ENCODE measurements at regions of chr6 and their contacts with region 1.

Region 1: GRCh38 chr6:46090115-46091079 is 39.4 kb upstream of the ENPP4 start:
- DNase-seq: no peak
- H3K4me3 ChIP-seq: no peak overlapping the region
- H3K27me3 ChIP-seq: no peaks in the 10 kb centered on the region
- CTCF ChIP-seq: peak; percentile 74

Region 2: DNA sequence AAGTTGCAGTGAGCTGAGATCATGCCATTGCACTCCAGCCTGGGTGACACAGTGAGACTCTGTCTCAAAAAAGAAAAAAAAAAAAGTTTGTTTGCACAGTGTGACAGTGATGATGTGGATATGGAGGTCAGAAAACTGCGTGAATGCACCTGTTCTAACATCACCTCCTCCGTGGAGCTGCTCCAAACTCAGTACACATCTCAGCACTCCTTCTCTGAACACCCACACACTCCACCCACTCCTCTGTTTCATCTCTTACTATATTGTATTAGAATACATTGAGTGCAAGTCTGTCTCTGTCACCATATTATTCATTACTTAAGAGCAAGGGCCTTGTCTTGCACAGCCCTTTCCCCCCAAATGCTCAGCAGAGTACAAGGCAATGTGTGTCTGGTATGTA is 12.1 kb before region 1 on chr6:
- CTCF ChIA-PET with region 1: interaction called, 24 read pairs
- POLR2A ChIA-PET with region 1: no interaction called
- DNase-seq: no peak
- H3K4me3 ChIP-seq: no peak overlapping the region
- H3K27me3 ChIP-seq: no peaks in the 10 kb centered on the region
- CTCF ChIP-seq: no peak

Region 3: GRCh38 chr6:46104209-46104608 is 13.8 kb after region 1 on chr6:
- CTCF ChIA-PET with region 1: interaction called, 19 read pairs
- POLR2A ChIA-PET with region 1: no interaction called
- DNase-seq: no peak
- H3K4me3 ChIP-seq: no peak overlapping the region
- H3K27me3 ChIP-seq: 0 out of 2 replicates have a peak, but pooled peaks cover 3% of the 10 kb centered on the region
- CTCF ChIP-seq: no peak

Region 4: DNA sequence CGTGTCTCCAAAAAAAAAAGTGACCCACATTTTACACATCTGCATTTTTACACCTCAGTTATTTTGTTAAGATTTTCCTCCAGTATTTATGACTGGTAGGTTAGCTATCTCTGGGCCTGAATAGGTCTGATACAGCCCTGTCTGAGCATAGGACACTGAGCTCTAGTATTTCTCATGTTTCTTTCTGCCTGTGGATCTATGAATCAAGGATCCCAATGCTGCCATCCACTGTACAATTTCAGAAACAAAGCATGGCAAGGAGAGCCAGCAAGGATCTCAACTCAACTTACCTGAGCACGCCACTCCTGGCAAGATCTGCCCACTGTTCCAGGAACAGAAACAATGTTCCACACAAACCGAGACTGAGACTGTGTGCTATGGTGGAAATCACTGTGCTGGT is 116.8 kb after region 1 on chr6:
- CTCF ChIA-PET with region 1: interaction called, 13 read pairs
- POLR2A ChIA-PET with region 1: no interaction called
- DNase-seq: no peak
- H3K4me3 ChIP-seq: no peak overlapping the region
- H3K27me3 ChIP-seq: no peaks in the 10 kb centered on the region
- CTCF ChIP-seq: no peak

Region 5: GRCh38 chr6:46215213-46215612 is 124.8 kb after region 1 on chr6:
- CTCF ChIA-PET with region 1: interaction called, 13 read pairs
- POLR2A ChIA-PET with region 1: no interaction called
- DNase-seq: no peak
- H3K4me3 ChIP-seq: no peak overlapping the region
- H3K27me3 ChIP-seq: no peaks in the 10 kb centered on the region
- CTCF ChIP-seq: no peak

Region 6: GRCh38 chr6:46279874-46280273 is 189.5 kb after region 1 on chr6:
- CTCF ChIA-PET with region 1: no interaction called
- POLR2A ChIA-PET with region 1: no interaction called
- DNase-seq: no peak
- H3K4me3 ChIP-seq: no peak overlapping the region
- H3K27me3 ChIP-seq: no peaks in the 10 kb centered on the region
- CTCF ChIP-seq: no peak

Region 7: GRCh38 chr6:46347669-46348068 is 257.3 kb after region 1 on chr6:
- CTCF ChIA-PET with region 1: no interaction called
- POLR2A ChIA-PET with region 1: no interaction called
- DNase-seq: no peak
- H3K4me3 ChIP-seq: no peak overlapping the region
- H3K27me3 ChIP-seq: no peaks in the 10 kb centered on the region
- CTCF ChIP-seq: no peak

Region 8: GRCh38 chr6:46410334-46410953 is 320.0 kb after region 1 on chr6:
- CTCF ChIA-PET with region 1: interaction called, 15 read pairs
- POLR2A ChIA-PET with region 1: no interaction called
- DNase-seq: no peak
- H3K4me3 ChIP-seq: no peak overlapping the region
- H3K27me3 ChIP-seq: peaks cover 5% of the 10 kb centered on the region
- CTCF ChIP-seq: peak; percentile 58

Region 9: GRCh38 chr6:46491628-46492547 is 401.5 kb after region 1 on chr6:
- CTCF ChIA-PET with region 1: interaction called, 10 read pairs
- POLR2A ChIA-PET with region 1: no interaction called
- DNase-seq: no peak
- H3K4me3 ChIP-seq: peak overlapping the region; percentile 59
- H3K27me3 ChIP-seq: peaks cover 8% of the 10 kb centered on the region
- CTCF ChIP-seq: peak; percentile 88